Heart left ventricle (tissue), 16 donors: ENCODE measurements at regions of chr11 and their contacts with region 1.

Region 1: DNA sequence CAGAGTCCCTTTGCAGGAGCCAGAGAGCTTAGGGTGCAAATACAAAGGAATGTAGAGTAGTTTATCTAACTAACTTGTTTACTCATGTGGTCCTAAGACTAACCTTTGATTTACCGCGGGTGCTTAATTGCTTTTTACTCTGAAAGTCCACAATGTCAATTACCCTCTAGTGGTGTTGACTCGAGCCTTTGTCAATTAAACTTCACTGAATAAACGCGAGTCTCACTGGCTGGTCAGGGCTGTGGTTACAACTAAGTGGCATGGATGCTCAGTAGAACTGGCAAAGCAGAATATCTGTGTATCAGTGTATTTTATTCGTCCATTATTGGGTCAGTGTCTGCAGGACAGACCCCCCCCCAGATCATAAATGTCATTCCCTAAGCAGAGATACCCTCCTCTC is 181.7 kb downstream of the OR4C45 start:
- DNase-seq: no peak
- ATAC-seq: no peak
- H3K4me3 ChIP-seq: no peak overlapping the region
- H3K27ac ChIP-seq: no peak overlapping the region
- H3K4me1 ChIP-seq: no peaks in the 10 kb centered on the region
- H3K27me3 ChIP-seq: no peaks in the 10 kb centered on the region
- CTCF ChIP-seq: no peak
- POLR2A ChIP-seq: no peak

Region 2: DNA sequence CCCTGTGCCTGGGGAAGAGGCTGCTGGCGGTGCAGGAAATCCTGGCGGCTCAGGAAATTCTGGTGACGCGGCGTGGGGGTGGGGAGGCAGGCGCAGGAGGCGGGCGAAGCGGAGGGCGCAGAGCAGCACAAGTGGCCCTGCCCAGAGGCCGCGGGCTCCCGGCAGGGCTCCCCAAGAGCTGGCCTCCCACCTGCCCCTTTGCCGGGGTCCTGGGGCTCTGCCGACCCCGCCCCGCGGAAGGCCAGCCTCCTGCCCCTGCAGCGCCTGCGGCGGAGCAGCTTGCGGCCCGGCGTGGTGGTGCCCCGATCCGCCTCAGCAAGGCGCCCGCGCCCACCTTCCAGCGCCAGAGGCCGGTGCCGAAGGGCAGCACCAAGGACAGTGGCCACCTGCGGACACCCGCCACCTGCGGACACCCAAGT is 362.4 kb before region 1 on chr11:
- intact Hi-C with region 1: no loop called
- DNase-seq: no peak
- ATAC-seq: no peak
- H3K4me3 ChIP-seq: no peak overlapping the region
- H3K27ac ChIP-seq: no peak overlapping the region
- H3K4me1 ChIP-seq: no peaks in the 10 kb centered on the region
- H3K27me3 ChIP-seq: no peaks in the 10 kb centered on the region
- CTCF ChIP-seq: no peak
- POLR2A ChIP-seq: no peak

Region 3: DNA sequence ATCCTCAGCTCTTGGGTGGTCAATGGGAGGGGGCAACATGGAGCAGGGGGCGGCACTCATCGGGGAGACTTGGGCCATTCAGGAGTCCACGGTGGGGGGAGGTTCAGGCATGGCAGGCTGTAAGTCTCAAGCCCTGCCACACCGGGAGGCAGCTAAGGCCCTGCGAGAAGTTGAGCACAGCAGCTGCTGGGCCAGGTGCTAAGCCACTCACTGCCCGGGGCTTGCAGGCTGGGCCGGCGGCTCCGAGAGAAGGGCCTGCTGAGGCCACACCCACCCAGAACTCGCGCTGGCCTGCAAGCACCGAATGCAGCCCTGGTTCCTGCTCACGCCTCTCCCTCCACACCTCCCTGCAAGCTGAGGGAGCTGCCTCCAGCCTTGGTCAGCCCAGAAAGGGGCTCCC is 50.3 kb before region 1 on chr11:
- intact Hi-C with region 1: no loop called
- DNase-seq: peak in 1 of 5 donors; percentile 47
- ATAC-seq: no peak
- H3K4me3 ChIP-seq: no peak overlapping the region
- H3K27ac ChIP-seq: no peak overlapping the region
- H3K4me1 ChIP-seq: no peaks in the 10 kb centered on the region
- H3K27me3 ChIP-seq: no peaks in the 10 kb centered on the region
- CTCF ChIP-seq: no peak
- POLR2A ChIP-seq: no peak

Region 4: DNA sequence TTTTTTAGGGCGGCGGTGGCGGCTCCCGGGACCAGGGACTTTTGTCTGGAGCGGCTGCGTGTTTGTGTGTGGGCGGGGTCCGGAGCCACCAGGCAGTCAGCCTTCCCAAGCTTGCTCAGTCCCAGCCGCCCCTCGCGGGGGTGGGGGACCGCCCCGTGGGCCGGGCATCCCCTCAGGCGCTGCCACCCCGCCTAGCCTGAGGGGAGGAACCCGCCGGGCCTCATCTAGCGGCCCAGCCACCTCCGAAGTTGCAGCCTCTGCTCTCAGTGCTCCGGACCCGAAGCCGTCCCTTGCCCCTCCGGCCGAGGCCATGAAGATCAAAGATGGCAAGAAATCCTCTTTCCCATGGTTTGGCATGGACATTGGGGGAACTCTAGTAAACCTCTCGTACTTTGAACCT is 53.5 kb after region 1 on chr11:
- intact Hi-C with region 1: loop called in 2 of 10 experiments (anchors 10 kb)
- DNase-seq: no peak
- ATAC-seq: no peak
- H3K4me3 ChIP-seq: no peak overlapping the region
- H3K27ac ChIP-seq: no peak overlapping the region
- H3K4me1 ChIP-seq: no peaks in the 10 kb centered on the region
- H3K27me3 ChIP-seq: no peaks in the 10 kb centered on the region
- CTCF ChIP-seq: no peak
- POLR2A ChIP-seq: no peak

Region 5: DNA sequence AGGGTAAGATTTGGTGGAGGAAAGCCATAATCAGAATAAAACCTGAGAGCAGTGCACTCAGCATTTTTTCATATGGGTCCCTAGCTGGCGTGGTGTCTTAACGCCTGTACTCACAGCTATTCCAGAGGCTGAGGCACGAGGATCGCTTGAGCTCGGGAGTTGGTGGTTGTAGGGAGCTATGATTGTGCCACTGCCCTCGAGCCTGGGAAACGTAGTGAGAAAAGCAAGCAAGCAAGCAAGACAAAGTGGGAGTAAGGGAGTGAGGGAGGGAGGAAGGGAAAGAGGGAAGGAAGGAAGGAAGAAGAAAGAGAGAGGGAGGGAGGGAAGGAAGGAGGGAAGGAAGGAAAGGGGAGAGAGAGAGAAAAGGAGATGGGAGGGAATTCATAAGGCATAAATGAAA is 60.8 kb after region 1 on chr11:
- intact Hi-C with region 1: loop called in 1 of 10 experiments (anchors 10 kb)
- DNase-seq: no peak
- ATAC-seq: no peak
- H3K4me3 ChIP-seq: no peak overlapping the region
- H3K27ac ChIP-seq: no peak overlapping the region
- H3K4me1 ChIP-seq: no peaks in the 10 kb centered on the region
- H3K27me3 ChIP-seq: no peaks in the 10 kb centered on the region
- CTCF ChIP-seq: no peak
- POLR2A ChIP-seq: no peak